K562 (cell line): ENCODE measurements at regions of chr2 and their contacts with region 1.

Region 1: GRCh38 chr2:100992262-100992661 is 9.8 kb upstream of the RPL31 start:
- DNase-seq: no peak
- ATAC-seq: peak; percentile 30; the same call in 2 of the 3 replicates
- H3K4me3 ChIP-seq: no peak overlapping the region
- H3K27ac ChIP-seq: no peak overlapping the region
- H3K4me1 ChIP-seq: peaks cover 0 to 7% of the 10 kb centered on the region in 2 experiments; a peak in 2 of 5 replicates
- H3K27me3 ChIP-seq: peaks cover 25 to 59% of the 10 kb centered on the region in 2 experiments; a peak in 4 of 5 replicates
- CTCF ChIP-seq: no peak
- EP300 ChIP-seq: no peak
- POLR2A ChIP-seq: no peak
- RAD21 ChIP-seq: no peak

Region 2: GRCh38 chr2:100730346-100730745 is 261.9 kb before region 1 on chr2:
- CTCF ChIA-PET with region 1: no interaction called
- POLR2A ChIA-PET with region 1: no interaction called
- in situ Hi-C with region 1: loop called (anchors 5 kb)
- intact Hi-C with region 1: no loop called
- DNase-seq: peak in 3 of 4 experiments; percentile 13 to 46 (median 23)
- ATAC-seq: peak; percentile 64
- H3K4me3 ChIP-seq: no peak overlapping the region
- H3K27ac ChIP-seq: no peak overlapping the region
- H3K4me1 ChIP-seq: no peaks in the 10 kb centered on the region
- H3K27me3 ChIP-seq: peaks cover 0 to 16% of the 10 kb centered on the region in 2 experiments; a peak in 4 of 5 replicates
- CTCF ChIP-seq: peak; percentile 54 to 62 (median 56)
- EP300 ChIP-seq: no peak
- POLR2A ChIP-seq: no peak
- RAD21 ChIP-seq: peak; percentile 43 to 69

Region 3: GRCh38 chr2:100865816-100866460 is 126.3 kb before region 1 on chr2:
- CTCF ChIA-PET with region 1: no interaction called
- POLR2A ChIA-PET with region 1: no interaction called
- in situ Hi-C with region 1: no loop called
- intact Hi-C with region 1: no loop called
- DNase-seq: no peak
- ATAC-seq: no peak
- H3K4me3 ChIP-seq: no peak overlapping the region
- H3K27ac ChIP-seq: no peak overlapping the region
- H3K4me1 ChIP-seq: no peaks in the 10 kb centered on the region
- H3K27me3 ChIP-seq: peaks cover 15 to 34% of the 10 kb centered on the region in 2 experiments; a peak in 4 of 5 replicates
- CTCF ChIP-seq: no peak
- EP300 ChIP-seq: no peak
- POLR2A ChIP-seq: no peak
- RAD21 ChIP-seq: no peak

Region 4: DNA sequence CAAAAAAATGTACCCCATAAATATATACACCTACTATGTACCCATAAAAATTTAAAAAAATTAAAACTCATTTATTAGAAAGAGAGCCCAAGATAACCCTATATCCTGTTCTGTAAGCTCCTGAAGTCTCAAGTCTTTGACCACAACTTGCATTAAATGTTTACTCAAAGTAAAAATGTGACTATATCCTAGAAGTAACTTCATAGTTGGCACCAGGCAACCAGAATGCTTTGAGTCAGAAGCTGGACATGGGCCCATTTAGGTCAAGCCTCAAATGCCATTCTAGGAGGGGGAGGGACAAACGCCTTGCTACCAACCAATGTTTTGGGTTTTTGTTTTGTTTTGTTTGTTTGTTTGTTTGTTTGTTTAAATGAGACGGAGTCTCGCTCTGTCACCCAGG is 168.2 kb after region 1 on chr2:
- CTCF ChIA-PET with region 1: no interaction called
- POLR2A ChIA-PET with region 1: no interaction called
- in situ Hi-C with region 1: no loop called
- intact Hi-C with region 1: no loop called
- DNase-seq: no peak
- ATAC-seq: no peak
- H3K4me3 ChIP-seq: no peak overlapping the region
- H3K27ac ChIP-seq: no peak overlapping the region
- H3K4me1 ChIP-seq: no peaks in the 10 kb centered on the region
- H3K27me3 ChIP-seq: peaks cover 9 to 16% of the 10 kb centered on the region in 2 experiments; a peak in 3 of 5 replicates
- CTCF ChIP-seq: no peak
- EP300 ChIP-seq: no peak
- POLR2A ChIP-seq: no peak
- RAD21 ChIP-seq: no peak